H1 (cell line): ENCODE measurements at regions of chr2 and their contacts with region 1.

Region 1: DNA sequence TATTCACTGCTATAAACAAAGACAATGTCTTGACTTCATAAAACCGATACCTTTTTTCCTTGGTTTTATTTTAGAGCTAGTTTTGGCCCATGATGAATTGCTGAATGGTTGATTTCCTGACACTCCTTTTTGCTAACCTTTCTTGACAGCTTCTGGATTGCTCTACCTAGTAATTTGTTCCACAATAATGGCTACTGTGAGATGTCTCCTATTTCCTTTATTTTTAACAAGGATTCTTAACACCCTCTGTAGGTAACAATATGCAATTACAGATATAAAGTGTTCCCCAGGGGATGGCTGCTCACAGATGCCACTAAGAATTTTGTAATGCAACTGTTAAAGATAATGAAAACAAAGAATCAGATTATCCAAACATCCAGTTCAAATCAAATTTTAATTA is 100.8 kb upstream of the ATP5MC3 start:
- DNase-seq: no peak
- H3K4me3 ChIP-seq: no peak overlapping the region
- H3K27ac ChIP-seq: no peak overlapping the region
- H3K4me1 ChIP-seq: no peaks in the 10 kb centered on the region
- H3K27me3 ChIP-seq: no peaks in the 10 kb centered on the region
- CTCF ChIP-seq: peak in 2 of 3 experiments; percentile 25 to 49; a peak in 2 of 4 replicates
- EP300 ChIP-seq: no peak
- POLR2A ChIP-seq: no peak
- RAD21 ChIP-seq: peak; percentile 50 to 56

Region 2: GRCh38 chr2:175030380-175031271 is 251.7 kb before region 1 on chr2:
- CTCF ChIA-PET with region 1: interaction called, 11 read pairs
- POLR2A ChIA-PET with region 1: no interaction called
- DNase-seq: peak; percentile 13 to 63
- H3K4me3 ChIP-seq: no peak overlapping the region
- H3K27ac ChIP-seq: no peak overlapping the region
- H3K4me1 ChIP-seq: no peaks in the 10 kb centered on the region; a peak in 1 of 7 replicates
- H3K27me3 ChIP-seq: no peaks in the 10 kb centered on the region
- CTCF ChIP-seq: peak; percentile 56 to 70 (median 60)
- EP300 ChIP-seq: no peak
- POLR2A ChIP-seq: no peak
- RAD21 ChIP-seq: peak; percentile 84 to 85

Region 3: DNA sequence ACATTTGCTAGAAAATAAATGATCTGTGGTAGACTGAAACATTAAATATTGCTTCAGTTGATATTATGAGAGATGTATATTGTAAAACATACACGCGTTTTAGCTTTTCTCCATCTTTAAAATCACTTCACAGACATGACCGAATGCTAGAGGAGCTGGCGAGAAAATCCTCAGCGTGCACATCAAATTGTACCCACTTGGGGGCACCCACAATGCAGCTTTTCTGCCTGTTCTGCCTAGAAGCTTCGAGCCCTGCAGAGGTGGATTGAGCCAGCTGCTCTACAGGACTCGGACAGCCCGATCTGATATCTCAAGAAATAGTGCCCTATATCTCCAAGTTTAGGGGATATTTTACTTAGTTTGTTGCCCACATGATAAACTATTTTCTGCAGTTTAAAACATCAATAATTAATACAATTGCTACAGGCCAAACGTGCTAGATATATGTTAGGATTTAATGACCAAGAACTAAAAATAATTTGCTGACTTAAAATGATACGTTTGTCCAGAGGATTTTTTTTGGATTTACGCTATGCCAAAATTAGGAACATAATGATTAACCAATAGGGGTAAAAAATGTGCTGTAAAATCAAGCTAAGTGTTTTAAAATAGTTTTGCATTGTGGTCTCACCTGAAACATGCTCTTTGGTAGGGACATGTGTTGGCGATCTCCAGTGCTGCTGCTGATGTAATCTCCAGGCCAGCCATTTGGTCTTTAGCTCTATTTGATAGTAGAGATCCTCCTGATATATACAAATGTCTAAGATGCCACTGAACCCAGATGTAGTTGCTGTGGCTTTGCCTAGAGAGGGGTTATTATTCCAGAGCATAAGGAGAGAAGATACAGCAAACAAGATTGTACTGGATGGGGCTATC is 78.4 kb before region 1 on chr2:
- CTCF ChIA-PET with region 1: interaction called, 24 read pairs
- POLR2A ChIA-PET with region 1: no interaction called
- DNase-seq: peak in 1 of 2 experiments; percentile 67
- H3K4me3 ChIP-seq: no peak overlapping the region
- H3K27ac ChIP-seq: no peak overlapping the region
- H3K4me1 ChIP-seq: no peaks in the 10 kb centered on the region
- H3K27me3 ChIP-seq: no peaks in the 10 kb centered on the region; a peak in 1 of 7 replicates
- CTCF ChIP-seq: peak; percentile 59 to 75 (median 73)
- EP300 ChIP-seq: no peak
- POLR2A ChIP-seq: no peak
- RAD21 ChIP-seq: peak; percentile 70 to 83

Region 4: DNA sequence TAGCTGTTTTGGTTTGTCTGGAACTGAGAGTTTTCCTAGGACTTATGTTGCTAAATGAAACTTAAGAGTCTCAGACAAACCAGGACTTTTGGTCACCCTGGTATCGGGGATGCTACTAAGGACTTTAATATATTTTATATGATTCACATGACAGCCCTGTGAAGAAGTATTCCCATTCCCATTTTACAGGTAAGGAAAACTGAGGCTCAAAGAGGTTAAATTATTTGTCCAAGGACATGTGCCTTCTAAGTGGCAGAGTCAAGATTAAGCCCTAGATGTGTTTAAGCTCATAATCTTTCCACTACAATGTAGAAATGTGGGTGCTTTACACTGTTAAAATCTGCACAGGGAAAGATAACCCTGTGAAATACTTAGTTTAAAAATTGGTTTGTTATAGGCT is 23.1 kb before region 1 on chr2:
- CTCF ChIA-PET with region 1: interaction called, 84 read pairs
- POLR2A ChIA-PET with region 1: no interaction called
- DNase-seq: no peak
- H3K4me3 ChIP-seq: no peak overlapping the region
- H3K27ac ChIP-seq: no peak overlapping the region
- H3K4me1 ChIP-seq: no peaks in the 10 kb centered on the region
- H3K27me3 ChIP-seq: no peaks in the 10 kb centered on the region
- CTCF ChIP-seq: no peak
- EP300 ChIP-seq: no peak
- POLR2A ChIP-seq: no peak
- RAD21 ChIP-seq: no peak

Region 5: GRCh38 chr2:175293776-175294175 is 11.5 kb after region 1 on chr2:
- CTCF ChIA-PET with region 1: interaction called, 13 read pairs
- POLR2A ChIA-PET with region 1: no interaction called
- DNase-seq: no peak
- H3K4me3 ChIP-seq: no peak overlapping the region
- H3K27ac ChIP-seq: no peak overlapping the region
- H3K4me1 ChIP-seq: peaks cover 0 to 2% (median 0%) of the 10 kb centered on the region in 4 experiments; a peak in 1 of 7 replicates
- H3K27me3 ChIP-seq: no peaks in the 10 kb centered on the region
- CTCF ChIP-seq: no peak
- EP300 ChIP-seq: no peak
- POLR2A ChIP-seq: no peak
- RAD21 ChIP-seq: no peak

Region 6: DNA sequence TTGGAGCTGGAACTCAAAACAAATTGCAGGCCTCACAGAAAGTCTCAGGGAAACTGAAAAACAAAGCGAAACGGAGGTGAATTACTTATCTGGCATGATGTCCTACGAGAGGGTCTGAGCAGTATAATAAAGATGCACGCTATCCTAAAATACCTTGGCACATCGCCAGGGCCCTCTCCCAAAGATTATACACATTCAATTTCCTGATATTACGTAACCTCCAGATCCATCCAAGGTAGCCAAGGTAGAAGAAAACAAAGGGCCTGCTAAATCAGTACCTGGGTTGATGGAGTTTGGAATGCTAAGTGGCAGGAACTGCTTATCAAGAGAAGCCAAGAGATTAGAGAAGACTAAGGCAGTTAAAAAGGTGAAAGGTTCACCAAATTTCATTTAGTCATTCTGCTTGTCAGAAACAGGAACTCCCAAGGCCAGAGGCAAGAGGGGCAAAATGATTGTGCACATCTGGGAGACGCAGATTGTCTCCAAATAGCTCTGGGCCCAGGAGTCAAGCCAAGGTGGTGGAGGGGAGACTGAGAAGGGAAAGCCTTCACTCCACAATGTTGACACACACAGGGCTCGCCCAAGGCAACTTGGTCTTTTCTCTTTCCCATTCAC is 136.0 kb after region 1 on chr2:
- CTCF ChIA-PET with region 1: no interaction called
- POLR2A ChIA-PET with region 1: no interaction called
- DNase-seq: no peak
- H3K4me3 ChIP-seq: no peak overlapping the region
- H3K27ac ChIP-seq: no peak overlapping the region
- H3K4me1 ChIP-seq: no peaks in the 10 kb centered on the region
- H3K27me3 ChIP-seq: no peaks in the 10 kb centered on the region
- CTCF ChIP-seq: no peak
- EP300 ChIP-seq: no peak
- POLR2A ChIP-seq: no peak
- RAD21 ChIP-seq: no peak